CD4-positive, alpha-beta memory T cell (primary cell): ENCODE measurements at regions of chr20 and their contacts with region 1.

Region 1: DNA sequence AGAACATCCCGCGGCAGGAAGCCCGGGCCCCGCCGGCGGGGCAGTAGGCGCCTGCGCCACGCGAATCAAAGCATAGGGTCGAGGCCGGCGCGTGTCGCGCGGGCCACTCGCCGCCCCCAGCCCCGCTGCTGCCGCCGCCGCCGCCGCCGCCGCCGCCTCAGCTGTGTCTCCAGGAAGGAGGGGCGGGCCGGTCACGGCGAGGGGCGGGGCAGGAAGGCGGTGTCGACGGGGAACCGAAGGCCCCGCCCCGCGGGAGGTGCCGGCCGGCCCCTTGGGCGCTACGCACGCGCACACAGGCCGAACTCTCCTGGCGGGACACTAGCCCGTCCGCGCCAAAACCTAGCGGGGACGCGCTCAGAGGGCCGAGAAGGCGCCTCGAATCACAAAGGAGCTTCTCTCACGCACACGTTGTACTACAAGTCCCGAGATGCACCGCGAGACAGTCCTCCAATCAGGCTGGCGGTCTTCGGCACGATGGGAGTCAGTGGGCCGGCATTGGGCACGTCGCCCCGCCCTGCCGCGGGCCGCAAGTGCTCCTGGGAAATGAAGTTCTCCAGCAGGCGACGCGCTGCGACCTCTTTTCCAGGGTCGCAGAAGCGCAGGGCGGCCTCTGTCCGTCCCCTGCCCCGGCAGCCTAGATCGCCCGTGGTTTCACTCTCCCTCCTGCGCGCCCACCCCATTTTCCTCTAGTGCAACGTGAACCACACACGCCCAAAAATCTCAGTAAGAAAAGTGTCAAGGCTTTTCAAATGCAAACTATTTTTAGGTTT is at the start of gene RALGAPA2:
- DNase-seq: peak; percentile 94 to 96 (median 94)
- H3K4me3 ChIP-seq: peak within 1 kb of the TSS; percentile 42 to 79
- H3K4me3 Mint-ChIP-seq: peak within 1 kb of the TSS; percentile 91 to 97 (median 96)
- H3K27ac ChIP-seq: peak within 1 kb of the TSS; percentile 79
- H3K27ac Mint-ChIP-seq: peak within 1 kb of the TSS; percentile 90 to 99 (median 96)
- H3K4me1 ChIP-seq: peaks cover 17% of the 10 kb centered on the region
- H3K4me1 Mint-ChIP-seq: peaks cover 25 to 39% (median 29%) of the 10 kb centered on the region in 4 donors
- H3K27me3 ChIP-seq: no peaks in the 10 kb centered on the region
- H3K27me3 Mint-ChIP-seq: peaks cover 0 to 3% of the 10 kb centered on the region in 2 donors
- total RNA-seq, gene RALGAPA2: 33.6 to 36.3 TPM

Region 2: DNA sequence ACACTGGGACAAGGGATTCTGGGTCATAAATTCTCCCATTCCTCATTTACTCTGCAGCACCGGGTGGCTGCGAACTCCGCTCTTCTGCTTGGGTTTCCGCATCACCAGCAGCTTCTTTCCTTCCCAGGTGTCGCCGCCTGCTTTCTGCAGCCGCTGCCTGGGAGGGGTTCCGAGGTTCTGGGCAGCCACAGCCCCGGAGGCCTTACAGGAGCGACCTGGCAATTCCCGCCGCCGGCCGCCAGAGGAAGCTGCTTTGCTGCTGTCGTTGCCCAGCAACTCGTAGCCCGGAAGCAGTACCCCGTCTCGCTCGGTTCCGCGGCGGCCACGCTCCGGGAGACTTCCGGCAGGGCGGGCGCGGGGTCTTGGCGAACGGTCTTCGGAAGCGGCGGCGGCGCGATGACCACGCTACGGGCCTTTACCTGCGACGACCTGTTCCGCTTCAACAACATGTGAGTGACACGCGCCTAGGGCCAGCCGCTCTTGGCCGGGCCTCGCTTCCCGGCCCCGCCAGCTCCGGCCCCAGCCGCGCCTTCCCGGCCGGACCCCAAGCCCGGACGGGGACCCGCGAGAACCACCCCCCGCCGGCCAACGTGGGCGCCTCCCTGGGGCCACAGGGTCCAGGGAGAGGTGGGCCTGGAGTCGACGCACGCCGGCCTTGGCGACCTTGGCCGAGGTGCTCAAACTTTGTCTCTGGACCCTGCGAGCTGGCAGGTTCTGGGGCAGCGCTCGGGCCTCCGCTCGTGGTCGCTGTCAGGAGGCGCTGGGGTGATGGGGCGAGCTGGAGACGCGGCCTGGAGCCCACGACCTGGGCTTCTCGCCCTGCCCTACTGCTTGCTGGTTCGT is 695.4 kb before region 1 on chr20 and contains the start of gene NAA20:
- CTCF ChIA-PET with region 1: no interaction called
- POLR2A ChIA-PET with region 1: no interaction called
- intact Hi-C with region 1: loop called (anchors 10 kb)
- DNase-seq: peak; percentile 86 to 93 (median 88)
- H3K4me3 ChIP-seq: peak within 1 kb of the TSS; percentile 61 to 70
- H3K4me3 Mint-ChIP-seq: peak within 1 kb of the TSS; percentile 86 to 96 (median 94)
- H3K27ac ChIP-seq: peak within 1 kb of the TSS; percentile 85
- H3K27ac Mint-ChIP-seq: peak within 1 kb of the TSS; percentile 88 to 98 (median 94)
- H3K4me1 ChIP-seq: peaks cover 54% of the 10 kb centered on the region
- H3K4me1 Mint-ChIP-seq: peaks cover 35 to 58% (median 47%) of the 10 kb centered on the region in 4 donors
- H3K27me3 ChIP-seq: no peaks in the 10 kb centered on the region
- H3K27me3 Mint-ChIP-seq: no peaks in the 10 kb centered on the region
- total RNA-seq, gene NAA20: 32.5 to 33.5 TPM

Region 3: GRCh38 chr20:20334489-20334888 is 378.2 kb before region 1 on chr20:
- CTCF ChIA-PET with region 1: no interaction called
- POLR2A ChIA-PET with region 1: no interaction called
- intact Hi-C with region 1: no loop called
- DNase-seq: no peak
- H3K4me3 ChIP-seq: no peak overlapping the region
- H3K4me3 Mint-ChIP-seq: no peak overlapping the region
- H3K27ac ChIP-seq: no peak overlapping the region
- H3K27ac Mint-ChIP-seq: no peak overlapping the region
- H3K4me1 ChIP-seq: no peaks in the 10 kb centered on the region
- H3K4me1 Mint-ChIP-seq: no peaks in the 10 kb centered on the region
- H3K27me3 ChIP-seq: no peaks in the 10 kb centered on the region
- H3K27me3 Mint-ChIP-seq: peaks cover 6 to 8% of the 10 kb centered on the region in 2 donors

Region 4: GRCh38 chr20:20568604-20569205 is 144.0 kb before region 1 on chr20:
- CTCF ChIA-PET with region 1: no interaction called
- POLR2A ChIA-PET with region 1: no interaction called
- intact Hi-C with region 1: no loop called
- DNase-seq: peak in 4 of 5 donors; percentile 4 to 23 (median 10)
- H3K4me3 ChIP-seq: no peak overlapping the region
- H3K4me3 Mint-ChIP-seq: no peak overlapping the region
- H3K27ac ChIP-seq: no peak overlapping the region
- H3K27ac Mint-ChIP-seq: no peak overlapping the region
- H3K4me1 ChIP-seq: no peaks in the 10 kb centered on the region
- H3K4me1 Mint-ChIP-seq: no peaks in the 10 kb centered on the region
- H3K27me3 ChIP-seq: no peaks in the 10 kb centered on the region
- H3K27me3 Mint-ChIP-seq: no peaks in the 10 kb centered on the region

Region 5: GRCh38 chr20:20664795-20665589 is 47.7 kb before region 1 on chr20:
- CTCF ChIA-PET with region 1: no interaction called
- POLR2A ChIA-PET with region 1: no interaction called
- intact Hi-C with region 1: no loop called
- DNase-seq: peak in 4 of 5 donors; percentile 7 to 13 (median 9)
- H3K4me3 ChIP-seq: no peak overlapping the region
- H3K4me3 Mint-ChIP-seq: no peak overlapping the region
- H3K27ac ChIP-seq: no peak overlapping the region
- H3K27ac Mint-ChIP-seq: peak overlapping the region in 1 of 7 donors; percentile 32
- H3K4me1 ChIP-seq: peaks cover 8% of the 10 kb centered on the region
- H3K4me1 Mint-ChIP-seq: peaks cover 19 to 43% (median 24%) of the 10 kb centered on the region in 4 donors
- H3K27me3 ChIP-seq: no peaks in the 10 kb centered on the region
- H3K27me3 Mint-ChIP-seq: no peaks in the 10 kb centered on the region

Region 6: GRCh38 chr20:21099751-21100577 is 387.3 kb after region 1 on chr20:
- CTCF ChIA-PET with region 1: no interaction called
- POLR2A ChIA-PET with region 1: interaction called, 3 read pairs
- intact Hi-C with region 1: loop called (anchors 1 kb)
- DNase-seq: peak in 4 of 5 donors; percentile 44 to 62 (median 48)
- H3K4me3 ChIP-seq: peak overlapping the region; percentile 54 to 62
- H3K4me3 Mint-ChIP-seq: peak overlapping the region; percentile 80 to 98 (median 88)
- H3K27ac ChIP-seq: no peak overlapping the region
- H3K27ac Mint-ChIP-seq: peak overlapping the region; percentile 42 to 93 (median 74)
- H3K4me1 ChIP-seq: peaks cover 44% of the 10 kb centered on the region
- H3K4me1 Mint-ChIP-seq: peaks cover 16 to 59% (median 42%) of the 10 kb centered on the region in 4 donors
- H3K27me3 ChIP-seq: peaks cover 65% of the 10 kb centered on the region
- H3K27me3 Mint-ChIP-seq: peaks cover 61% of the 10 kb centered on the region in 2 donors